ENCODE measurements at regions of chr9 and their contacts with region 1.

Region 1: GRCh38 chr9:38017149-38017884 is 51.7 kb downstream of the SHB start:
- DNase-seq: peak; percentile 85
- H3K4me3 ChIP-seq: no peak overlapping the region
- H3K27ac ChIP-seq: peak overlapping the region; percentile 53 to 63
- H3K4me1 ChIP-seq: peaks cover 40% of the 10 kb centered on the region
- H3K27me3 ChIP-seq: no peaks in the 10 kb centered on the region
- CTCF ChIP-seq: peak in 3 of 4 experiments; percentile 48 to 82 (median 72)
- POLR2A ChIP-seq: no peak

Region 2: DNA sequence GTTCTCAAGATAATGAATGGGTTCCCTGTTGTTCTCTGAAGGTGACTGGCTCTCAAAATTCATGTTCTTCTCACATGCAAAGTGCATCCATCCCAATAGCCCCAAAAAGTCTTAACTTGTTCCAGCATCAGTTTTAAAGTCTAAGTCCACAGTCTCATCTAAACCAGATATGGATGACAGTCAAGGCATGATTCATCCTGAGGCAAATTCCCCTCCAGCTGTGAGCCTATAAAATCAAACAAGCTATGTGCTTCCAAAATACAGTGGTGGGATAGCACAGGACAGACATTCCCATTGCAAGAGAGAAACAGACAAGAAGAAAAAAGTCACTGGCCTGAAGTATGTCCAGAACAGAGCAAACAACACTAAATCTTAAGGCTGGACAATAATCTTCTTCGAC is 466.5 kb before region 1 on chr9:
- intact Hi-C with region 1: no loop called
- DNase-seq: no peak
- H3K4me3 ChIP-seq: no peak overlapping the region
- H3K27ac ChIP-seq: no peak overlapping the region
- H3K4me1 ChIP-seq: no peaks in the 10 kb centered on the region
- H3K27me3 ChIP-seq: no peaks in the 10 kb centered on the region
- CTCF ChIP-seq: no peak
- POLR2A ChIP-seq: no peak

Region 3: GRCh38 chr9:37938121-37938891 is 79.0 kb before region 1 on chr9:
- intact Hi-C with region 1: loop called (anchors 2 kb)
- DNase-seq: peak; percentile 81
- H3K4me3 ChIP-seq: no peak overlapping the region
- H3K27ac ChIP-seq: peak overlapping the region in 1 of 2 donors; percentile 41
- H3K4me1 ChIP-seq: peaks cover 21% of the 10 kb centered on the region
- H3K27me3 ChIP-seq: no peaks in the 10 kb centered on the region
- CTCF ChIP-seq: no peak
- POLR2A ChIP-seq: no peak